MCF 10A (cell line): ENCODE measurements at regions of chr3 and their contacts with region 1.

Region 1: GRCh38 chr3:9843715-9844438 is at the start of gene RPUSD3:
- DNase-seq: peak; percentile 95
- H3K4me3 Mint-ChIP-seq: peak within 1 kb of the TSS; percentile 100
- H3K27ac Mint-ChIP-seq: peak within 1 kb of the TSS; percentile 92
- H3K4me1 Mint-ChIP-seq: peaks cover 14% of the 10 kb centered on the region
- H3K27me3 Mint-ChIP-seq: no peaks in the 10 kb centered on the region
- CTCF ChIP-seq: no peak
- total RNA-seq, gene RPUSD3: 40.3 and 40.7 TPM in 2 replicates

Region 2: DNA sequence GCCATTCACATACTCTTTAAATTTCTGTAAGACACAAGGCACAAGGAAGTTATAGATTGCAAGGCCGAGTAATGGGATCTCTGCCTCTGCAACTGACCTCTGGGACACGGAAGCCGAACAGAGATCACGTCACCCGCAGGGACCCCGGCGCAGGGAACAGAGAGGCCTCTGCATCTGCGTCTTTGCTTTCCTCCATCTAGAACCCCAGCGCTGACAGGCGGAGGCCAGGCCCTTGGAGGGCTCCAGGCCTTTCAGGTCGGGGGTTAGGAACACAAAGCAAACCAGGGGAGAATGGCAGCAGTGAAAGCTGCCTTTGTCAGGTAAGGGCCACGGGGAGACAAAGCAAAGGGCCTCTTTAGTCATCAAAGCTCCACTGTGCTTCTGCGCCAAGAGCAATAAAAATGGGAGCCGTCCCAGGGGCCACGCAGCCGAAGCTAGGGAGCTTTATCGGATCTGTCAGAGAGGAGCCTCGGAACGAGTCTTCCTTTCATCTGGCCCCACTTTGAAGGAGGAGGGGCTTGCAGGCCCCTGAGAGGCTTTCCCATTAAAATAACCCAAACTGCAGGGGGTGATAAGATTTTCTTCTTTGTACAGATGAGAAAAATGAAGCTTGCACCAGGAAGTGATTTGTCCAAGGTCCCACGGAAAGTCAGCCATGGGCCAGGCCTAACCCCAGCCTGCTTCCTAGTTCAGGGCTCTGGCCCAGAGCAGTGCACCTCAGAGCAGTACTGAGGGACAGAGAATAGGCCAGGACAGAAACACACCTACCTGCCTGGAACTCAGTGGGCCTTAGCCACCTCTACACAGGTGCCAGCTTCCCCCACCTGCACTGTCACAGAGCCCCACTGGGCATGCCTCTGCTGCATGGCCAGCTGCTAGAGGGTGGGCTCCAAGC is 796.2 kb before region 1 on chr3:
- CTCF ChIA-PET with region 1: no interaction called
- POLR2A ChIA-PET with region 1: no interaction called
- intact Hi-C with region 1: no loop called
- DNase-seq: no peak
- H3K4me3 Mint-ChIP-seq: no peak overlapping the region
- H3K27ac Mint-ChIP-seq: no peak overlapping the region
- H3K4me1 Mint-ChIP-seq: no peaks in the 10 kb centered on the region
- H3K27me3 Mint-ChIP-seq: no peaks in the 10 kb centered on the region
- CTCF ChIP-seq: no peak

Region 3: GRCh38 chr3:9884555-9885165 is 40.8 kb after region 1 on chr3:
- CTCF ChIA-PET with region 1: interaction called, 16 read pairs
- POLR2A ChIA-PET with region 1: interaction called, 19 read pairs
- intact Hi-C with region 1: no loop called
- DNase-seq: peak; percentile 90
- H3K4me3 Mint-ChIP-seq: peak overlapping the region; percentile 53
- H3K27ac Mint-ChIP-seq: peak overlapping the region; percentile 98
- H3K4me1 Mint-ChIP-seq: peaks cover 24% of the 10 kb centered on the region
- H3K27me3 Mint-ChIP-seq: no peaks in the 10 kb centered on the region
- CTCF ChIP-seq: no peak

Region 4: GRCh38 chr3:9897408-9898372 is 53.8 kb after region 1 on chr3:
- CTCF ChIA-PET with region 1: interaction called, 6 read pairs
- POLR2A ChIA-PET with region 1: interaction called, 16 read pairs
- intact Hi-C with region 1: loop called (anchors 2 kb)
- DNase-seq: peak; percentile 96
- H3K4me3 Mint-ChIP-seq: peak overlapping the region; percentile 33
- H3K27ac Mint-ChIP-seq: peak overlapping the region; percentile 79
- H3K4me1 Mint-ChIP-seq: peaks cover 59% of the 10 kb centered on the region
- H3K27me3 Mint-ChIP-seq: no peaks in the 10 kb centered on the region
- CTCF ChIP-seq: no peak

Region 5: GRCh38 chr3:9932843-9933560 is 89.1 kb after region 1 on chr3:
- CTCF ChIA-PET with region 1: interaction called, 31 read pairs
- POLR2A ChIA-PET with region 1: interaction called, 14 read pairs
- intact Hi-C with region 1: loop called (anchors 1 kb)
- DNase-seq: peak; percentile 77
- H3K4me3 Mint-ChIP-seq: peak overlapping the region; percentile 90
- H3K27ac Mint-ChIP-seq: peak overlapping the region; percentile 86
- H3K4me1 Mint-ChIP-seq: peaks cover 23% of the 10 kb centered on the region
- H3K27me3 Mint-ChIP-seq: no peaks in the 10 kb centered on the region
- CTCF ChIP-seq: peak; percentile 59